ENCODE measurements at regions of chr1 and their contacts with region 1.

Region 1: GRCh38 chr1:180020017-180020416 is 65.4 kb downstream of the CEP350 start:
- DNase-seq: no peak
- ATAC-seq: no peak
- H3K4me3 ChIP-seq: no peak overlapping the region
- H3K27ac ChIP-seq: no peak overlapping the region
- H3K4me1 ChIP-seq: no peaks in the 10 kb centered on the region
- H3K27me3 ChIP-seq: no peaks in the 10 kb centered on the region
- CTCF ChIP-seq: no peak
- EP300 ChIP-seq: no peak
- POLR2A ChIP-seq: no peak
- RAD21 ChIP-seq: no peak

Region 2: GRCh38 chr1:179976970-179977651 is 42.9 kb before region 1 on chr1:
- CTCF ChIA-PET with region 1: no interaction called
- POLR2A ChIA-PET with region 1: no interaction called
- RAD21 ChIA-PET with region 1: no interaction called
- SMC1A ChIA-PET with region 1: no interaction called
- in situ Hi-C with region 1: no loop called
- intact Hi-C with region 1: no loop called
- DNase-seq: no peak
- ATAC-seq: peak; percentile 21; the same call in 1 of the 3 replicates
- H3K4me3 ChIP-seq: no peak overlapping the region
- H3K27ac ChIP-seq: no peak overlapping the region
- H3K4me1 ChIP-seq: no peaks in the 10 kb centered on the region; the same call in 1 of the 2 replicates
- H3K27me3 ChIP-seq: no peaks in the 10 kb centered on the region
- CTCF ChIP-seq: no peak
- EP300 ChIP-seq: no peak
- POLR2A ChIP-seq: no peak
- RAD21 ChIP-seq: no peak

Region 3: GRCh38 chr1:180033390-180033789 is 13.4 kb after region 1 on chr1:
- CTCF ChIA-PET with region 1: interaction called, 10 read pairs
- POLR2A ChIA-PET with region 1: no interaction called
- RAD21 ChIA-PET with region 1: no interaction called
- SMC1A ChIA-PET with region 1: interaction called, 6 read pairs
- in situ Hi-C with region 1: no loop called
- intact Hi-C with region 1: no loop called
- DNase-seq: no peak
- ATAC-seq: no peak
- H3K4me3 ChIP-seq: no peak overlapping the region
- H3K27ac ChIP-seq: no peak overlapping the region
- H3K4me1 ChIP-seq: no peaks in the 10 kb centered on the region
- H3K27me3 ChIP-seq: no peaks in the 10 kb centered on the region
- CTCF ChIP-seq: no peak
- EP300 ChIP-seq: no peak
- POLR2A ChIP-seq: no peak
- RAD21 ChIP-seq: no peak

Region 4: GRCh38 chr1:180057883-180058396 is 37.9 kb after region 1 on chr1:
- CTCF ChIA-PET with region 1: no interaction called
- POLR2A ChIA-PET with region 1: no interaction called
- RAD21 ChIA-PET with region 1: no interaction called
- SMC1A ChIA-PET with region 1: no interaction called
- in situ Hi-C with region 1: no loop called
- intact Hi-C with region 1: loop called (anchors 5 kb)
- DNase-seq: no peak
- ATAC-seq: peak; percentile 69
- H3K4me3 ChIP-seq: no peak overlapping the region
- H3K27ac ChIP-seq: peak overlapping the region; percentile 24; the same call in 1 of the 2 replicates
- H3K4me1 ChIP-seq: no peaks in the 10 kb centered on the region
- H3K27me3 ChIP-seq: no peaks in the 10 kb centered on the region
- CTCF ChIP-seq: no peak
- EP300 ChIP-seq: no peak
- POLR2A ChIP-seq: no peak
- RAD21 ChIP-seq: no peak

Region 5: DNA sequence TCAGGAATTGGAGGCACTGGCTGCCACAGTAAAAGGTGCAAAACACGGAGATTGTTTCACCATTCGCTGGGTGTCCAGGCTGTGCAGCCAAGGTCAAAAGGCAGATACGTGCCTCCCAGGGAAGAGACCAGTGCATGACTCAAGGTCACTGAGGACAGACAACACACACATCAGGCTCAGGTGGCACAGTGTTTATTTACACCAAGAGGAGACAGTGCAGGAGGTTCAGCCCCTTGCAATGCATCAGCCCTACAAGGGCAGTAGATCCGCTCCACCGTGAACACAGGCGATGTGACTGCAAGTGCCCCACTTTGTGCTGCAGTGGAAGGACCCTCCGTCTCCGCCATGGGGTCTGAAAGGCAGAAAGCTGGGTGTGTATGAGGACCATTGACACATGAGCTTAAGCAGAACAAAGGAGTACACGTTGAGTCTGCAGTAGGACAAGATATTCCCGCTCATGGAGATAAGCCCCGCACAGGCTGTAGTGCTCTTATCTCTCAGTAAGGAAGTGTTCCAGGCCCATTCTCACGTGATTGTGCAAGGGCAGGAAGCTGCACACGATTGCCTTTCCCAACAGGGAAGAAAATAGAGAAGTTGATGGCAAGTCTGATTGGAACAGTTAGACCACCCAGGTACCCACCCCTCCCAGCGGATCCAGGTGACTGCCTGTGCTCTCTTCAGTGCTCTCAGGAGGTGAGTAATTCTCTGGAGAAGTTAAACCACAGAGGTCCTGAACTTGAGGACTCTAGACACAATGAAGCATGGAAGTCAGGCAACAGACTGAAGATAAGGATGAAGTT is 97.1 kb after region 1 on chr1:
- CTCF ChIA-PET with region 1: no interaction called
- POLR2A ChIA-PET with region 1: no interaction called
- RAD21 ChIA-PET with region 1: no interaction called
- SMC1A ChIA-PET with region 1: no interaction called
- in situ Hi-C with region 1: no loop called
- intact Hi-C with region 1: no loop called
- DNase-seq: no peak
- ATAC-seq: no peak
- H3K4me3 ChIP-seq: no peak overlapping the region
- H3K27ac ChIP-seq: no peak overlapping the region
- H3K4me1 ChIP-seq: no peaks in the 10 kb centered on the region
- H3K27me3 ChIP-seq: no peaks in the 10 kb centered on the region
- CTCF ChIP-seq: no peak
- EP300 ChIP-seq: no peak
- POLR2A ChIP-seq: no peak
- RAD21 ChIP-seq: no peak